Activated CD4-positive, alpha-beta memory T cell treated with anti-CD3 and anti-CD28 coated beads for 36 hours (primary cell): ENCODE measurements at regions of chr1 and their contacts with region 1.

Region 1: DNA sequence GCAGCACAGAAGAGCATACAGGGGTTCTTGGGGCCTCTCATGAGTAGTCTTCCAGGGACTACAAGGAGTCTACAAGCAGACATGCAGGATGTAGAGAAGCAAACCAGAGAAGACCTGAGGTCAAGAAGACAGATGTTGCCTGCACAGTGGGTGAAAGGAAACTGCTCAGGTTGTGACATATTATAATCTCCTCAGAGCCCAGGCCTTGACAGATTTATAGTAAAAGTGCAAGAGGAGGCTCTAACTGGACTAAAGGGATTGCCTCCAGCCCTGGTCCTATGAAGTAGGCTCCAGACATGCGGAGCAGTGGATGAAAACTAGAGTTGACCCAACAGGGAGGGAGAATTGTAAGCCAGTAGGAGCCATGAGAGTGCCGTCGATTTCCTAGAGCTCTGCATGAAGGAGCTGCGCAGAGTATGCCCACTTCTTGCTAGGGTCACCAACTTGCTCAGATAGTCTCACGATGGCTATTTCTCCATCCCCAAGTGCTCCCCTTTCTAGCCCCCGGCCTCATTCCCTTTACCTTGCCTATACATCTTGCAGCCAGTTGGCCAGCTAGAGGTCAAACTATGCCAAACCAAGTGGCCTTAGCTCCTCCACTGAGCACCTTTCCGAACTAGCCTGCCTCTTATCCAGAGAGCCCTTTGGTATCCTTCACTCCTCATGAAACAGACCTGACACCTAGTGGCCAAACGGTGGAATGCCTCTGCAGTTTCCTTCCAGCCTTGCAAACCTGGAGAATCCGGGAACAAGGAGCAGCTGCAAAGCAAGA is 36.2 kb upstream of the IPO9 start:
- DNase-seq: peak; percentile 59
- H3K4me3 Mint-ChIP-seq: no peak overlapping the region
- H3K27ac Mint-ChIP-seq: no peak overlapping the region
- H3K4me1 Mint-ChIP-seq: no peaks in the 10 kb centered on the region
- H3K27me3 Mint-ChIP-seq: no peaks in the 10 kb centered on the region

Region 2: DNA sequence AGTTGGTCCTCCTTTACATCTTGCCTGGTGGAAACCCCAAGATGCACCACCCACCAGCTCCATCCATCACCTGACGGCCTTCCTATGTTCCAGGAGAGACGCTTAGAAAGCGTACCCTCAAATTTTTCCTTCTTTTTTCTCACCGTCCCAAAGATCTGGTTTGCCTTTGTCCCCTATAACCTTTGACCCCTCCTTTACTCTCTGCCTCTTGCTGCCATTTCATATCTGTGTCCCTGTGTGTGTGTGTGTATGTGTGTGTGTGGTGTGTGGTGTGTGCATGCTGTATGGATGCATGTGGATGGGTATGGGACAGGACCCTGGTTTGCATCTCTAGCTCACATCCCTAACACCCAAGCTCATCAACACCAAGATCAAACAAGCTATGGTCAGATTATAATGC is 14.1 kb after region 1 on chr1:
- CTCF ChIA-PET with region 1: interaction called, 11 read pairs
- POLR2A ChIA-PET with region 1: no interaction called
- intact Hi-C with region 1: no loop called
- DNase-seq: no peak
- H3K4me3 Mint-ChIP-seq: no peak overlapping the region
- H3K27ac Mint-ChIP-seq: no peak overlapping the region
- H3K4me1 Mint-ChIP-seq: no peaks in the 10 kb centered on the region
- H3K27me3 Mint-ChIP-seq: no peaks in the 10 kb centered on the region